ENCODE measurements at regions of chr6 and their contacts with region 1.

Region 1: DNA sequence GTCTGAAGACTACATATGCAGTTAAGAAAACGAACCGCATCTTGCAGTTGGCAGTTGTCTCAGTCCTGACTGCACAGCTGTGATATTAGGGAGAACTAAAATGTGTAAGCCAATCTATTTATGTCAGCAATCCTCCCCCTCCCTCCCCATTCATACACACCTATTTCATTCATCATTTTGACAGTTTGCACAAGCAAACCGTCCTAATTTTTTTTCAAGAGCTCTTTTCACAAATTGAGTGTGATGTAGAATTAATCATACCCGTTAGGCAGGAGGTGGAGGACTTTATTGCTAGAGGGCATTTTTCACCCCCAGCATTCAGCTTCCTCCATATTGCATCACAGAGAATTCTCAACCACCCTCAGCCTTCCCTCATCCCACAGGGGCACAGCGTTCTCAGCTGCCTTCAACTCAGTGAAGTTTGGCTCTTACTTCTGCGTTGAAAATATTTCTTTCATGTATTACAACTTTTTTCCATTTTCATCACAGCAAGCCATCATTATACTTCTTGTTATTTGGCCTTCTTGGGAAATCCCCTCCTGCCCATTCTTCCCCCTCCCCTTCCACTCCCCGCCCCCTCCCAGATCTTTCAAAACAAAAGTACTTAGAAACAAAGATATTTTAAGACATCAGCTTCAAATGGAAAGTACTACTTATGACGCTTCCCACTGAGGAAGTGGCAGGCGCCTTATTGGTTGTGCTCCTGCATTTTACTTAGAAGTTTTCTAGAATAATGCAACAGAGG is 37.5 kb downstream of the NOX3 start:
- DNase-seq: peak; percentile 49
- H3K4me3 Mint-ChIP-seq: peak overlapping the region; percentile 73
- H3K27ac Mint-ChIP-seq: peak overlapping the region; percentile 100
- H3K4me1 Mint-ChIP-seq: peaks cover 44% of the 10 kb centered on the region
- H3K27me3 Mint-ChIP-seq: no peaks in the 10 kb centered on the region

Region 2: GRCh38 chr6:154733012-154733625 is 685.1 kb before region 1 on chr6 and contains the start of gene SCAF8:
- intact Hi-C with region 1: loop called (anchors 2 kb)
- DNase-seq: peak; percentile 85
- H3K4me3 Mint-ChIP-seq: peak within 1 kb of the TSS; percentile 97
- H3K27ac Mint-ChIP-seq: peak within 1 kb of the TSS; percentile 96
- H3K4me1 Mint-ChIP-seq: peaks cover 33% of the 10 kb centered on the region
- H3K27me3 Mint-ChIP-seq: peaks cover 4% of the 10 kb centered on the region
- total RNA-seq, gene SCAF8: 37.7 and 40.9 TPM in 2 replicates

Region 3: DNA sequence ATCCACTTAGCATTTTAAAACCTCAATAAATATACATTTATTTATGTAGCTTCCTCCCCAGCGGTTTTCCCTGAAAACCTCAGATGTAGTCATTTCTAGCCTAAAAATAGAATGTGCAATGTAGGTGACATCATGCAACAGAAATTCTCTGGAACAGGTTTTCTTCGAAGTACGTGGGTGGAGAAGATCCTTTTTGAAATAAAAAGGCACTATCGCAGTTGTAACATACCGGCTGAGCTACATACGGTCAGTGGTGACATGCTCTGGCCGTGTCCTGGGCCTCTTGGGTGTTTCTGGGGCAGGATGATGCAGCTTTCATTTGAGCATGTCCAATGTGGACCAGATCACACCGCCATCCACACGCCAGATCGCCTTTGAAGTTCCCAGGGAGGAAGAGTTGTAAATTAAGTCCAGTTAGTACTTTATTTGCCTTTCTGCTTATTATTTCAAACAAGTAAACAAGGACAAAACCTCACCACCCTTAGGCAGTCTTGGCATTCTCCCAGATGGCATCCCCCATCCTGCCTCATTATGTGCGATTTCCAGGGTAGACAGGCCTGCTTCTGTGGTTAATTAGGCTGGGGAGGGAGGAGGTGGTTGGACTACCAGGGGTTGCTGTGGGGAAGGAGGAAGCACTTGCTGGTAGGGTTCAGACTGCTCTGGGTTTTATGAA is 263.9 kb before region 1 on chr6:
- intact Hi-C with region 1: loop called (anchors 1 kb)
- DNase-seq: peak; percentile 48
- H3K4me3 Mint-ChIP-seq: peak overlapping the region; percentile 78
- H3K27ac Mint-ChIP-seq: peak overlapping the region; percentile 97
- H3K4me1 Mint-ChIP-seq: peaks cover 90% of the 10 kb centered on the region
- H3K27me3 Mint-ChIP-seq: peaks cover 2% of the 10 kb centered on the region

Region 4: GRCh38 chr6:155223646-155224451 is 194.3 kb before region 1 on chr6:
- intact Hi-C with region 1: loop called (anchors 1 kb)
- DNase-seq: peak; percentile 65
- H3K4me3 Mint-ChIP-seq: peak overlapping the region; percentile 70
- H3K27ac Mint-ChIP-seq: peak overlapping the region; percentile 91
- H3K4me1 Mint-ChIP-seq: peaks cover 34% of the 10 kb centered on the region
- H3K27me3 Mint-ChIP-seq: peaks cover 2% of the 10 kb centered on the region

Region 5: GRCh38 chr6:155351273-155352129 is 66.7 kb before region 1 on chr6:
- intact Hi-C with region 1: no loop called
- DNase-seq: no peak
- H3K4me3 Mint-ChIP-seq: no peak overlapping the region
- H3K27ac Mint-ChIP-seq: no peak overlapping the region
- H3K4me1 Mint-ChIP-seq: peaks cover 8% of the 10 kb centered on the region
- H3K27me3 Mint-ChIP-seq: peaks cover 2% of the 10 kb centered on the region

Region 6: DNA sequence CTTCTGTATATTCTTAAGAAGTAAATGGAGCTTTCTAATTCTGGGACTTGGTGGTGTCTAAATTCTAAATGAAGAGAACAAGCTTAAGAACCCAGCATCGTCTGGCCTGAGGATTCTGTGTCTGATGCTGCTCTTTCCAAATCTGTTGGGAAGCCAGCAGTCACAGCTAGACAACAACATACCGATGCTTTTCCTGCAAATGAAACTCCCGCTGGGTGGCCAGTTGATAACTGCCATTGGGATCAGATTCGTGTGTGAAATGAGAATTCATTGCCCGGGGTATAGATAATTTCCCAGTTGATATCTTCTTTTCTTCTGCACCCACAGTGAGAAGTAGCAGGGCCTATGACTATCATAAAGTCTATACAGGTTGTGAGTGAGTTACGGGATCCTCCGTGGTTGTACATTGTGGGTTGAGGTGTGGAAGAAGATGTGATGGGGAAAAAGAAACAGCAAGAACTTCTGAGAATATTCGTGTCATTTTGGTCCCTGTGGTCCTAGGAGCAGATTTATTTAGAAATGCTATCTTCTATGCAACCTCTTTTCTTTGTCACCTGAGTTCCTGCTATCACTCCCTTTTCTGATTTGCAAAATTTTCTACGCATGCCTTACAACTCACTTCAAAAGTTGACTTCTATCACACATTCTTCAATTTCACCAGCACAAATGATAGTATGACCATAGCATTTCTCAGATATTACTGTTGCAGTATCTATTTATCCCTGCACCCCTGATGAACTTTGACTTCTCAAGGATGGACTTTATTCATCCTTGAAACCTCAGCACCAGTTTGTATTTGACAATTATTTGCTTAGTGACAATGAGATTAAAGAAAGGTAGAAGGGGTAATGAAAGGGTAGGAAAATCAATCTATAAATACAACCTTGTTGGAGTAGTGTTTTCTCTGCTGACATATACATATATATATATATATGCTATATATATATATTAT is 27.0 kb after region 1 on chr6:
- intact Hi-C with region 1: loop called (anchors 1 kb)
- DNase-seq: peak; percentile 11
- H3K4me3 Mint-ChIP-seq: no peak overlapping the region
- H3K27ac Mint-ChIP-seq: no peak overlapping the region
- H3K4me1 Mint-ChIP-seq: peaks cover 18% of the 10 kb centered on the region
- H3K27me3 Mint-ChIP-seq: peaks cover 5% of the 10 kb centered on the region

Region 7: DNA sequence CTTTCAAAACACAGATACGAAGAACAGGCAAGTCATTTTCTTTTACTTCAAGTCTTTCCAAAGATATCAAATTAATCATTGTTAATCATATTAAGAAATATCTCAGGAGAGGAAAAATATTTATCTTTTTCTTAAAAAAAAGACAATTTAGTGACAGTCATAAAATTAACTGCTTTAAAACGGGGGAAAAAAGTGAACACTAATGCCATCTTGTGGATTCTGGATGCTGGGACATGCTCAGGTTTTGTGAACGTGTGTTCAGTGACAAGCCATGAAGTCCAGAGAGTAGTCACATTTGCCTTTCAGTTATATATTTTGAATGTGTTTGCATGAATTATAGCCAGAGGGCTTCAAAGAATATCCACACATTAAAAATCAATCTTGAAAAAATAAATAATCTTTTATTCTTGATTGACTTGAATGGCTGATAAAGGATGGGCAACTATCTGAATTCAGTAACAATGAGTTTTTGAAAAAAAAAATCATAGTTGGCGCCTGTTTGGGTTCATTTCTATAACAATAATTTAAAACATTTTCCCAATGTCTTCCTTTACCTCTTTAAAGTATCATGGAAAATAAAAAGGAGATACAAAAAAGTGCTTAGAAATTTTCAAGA is 112.1 kb after region 1 on chr6:
- intact Hi-C with region 1: loop called (anchors 1 kb)
- DNase-seq: no peak
- H3K4me3 Mint-ChIP-seq: no peak overlapping the region
- H3K27ac Mint-ChIP-seq: no peak overlapping the region
- H3K4me1 Mint-ChIP-seq: peaks cover 10% of the 10 kb centered on the region
- H3K27me3 Mint-ChIP-seq: peaks cover 4% of the 10 kb centered on the region

Region 8: GRCh38 chr6:155599561-155599960 is 181.4 kb after region 1 on chr6:
- intact Hi-C with region 1: no loop called
- DNase-seq: no peak
- H3K4me3 Mint-ChIP-seq: no peak overlapping the region
- H3K27ac Mint-ChIP-seq: no peak overlapping the region
- H3K4me1 Mint-ChIP-seq: no peaks in the 10 kb centered on the region
- H3K27me3 Mint-ChIP-seq: peaks cover 7% of the 10 kb centered on the region

Region 9: DNA sequence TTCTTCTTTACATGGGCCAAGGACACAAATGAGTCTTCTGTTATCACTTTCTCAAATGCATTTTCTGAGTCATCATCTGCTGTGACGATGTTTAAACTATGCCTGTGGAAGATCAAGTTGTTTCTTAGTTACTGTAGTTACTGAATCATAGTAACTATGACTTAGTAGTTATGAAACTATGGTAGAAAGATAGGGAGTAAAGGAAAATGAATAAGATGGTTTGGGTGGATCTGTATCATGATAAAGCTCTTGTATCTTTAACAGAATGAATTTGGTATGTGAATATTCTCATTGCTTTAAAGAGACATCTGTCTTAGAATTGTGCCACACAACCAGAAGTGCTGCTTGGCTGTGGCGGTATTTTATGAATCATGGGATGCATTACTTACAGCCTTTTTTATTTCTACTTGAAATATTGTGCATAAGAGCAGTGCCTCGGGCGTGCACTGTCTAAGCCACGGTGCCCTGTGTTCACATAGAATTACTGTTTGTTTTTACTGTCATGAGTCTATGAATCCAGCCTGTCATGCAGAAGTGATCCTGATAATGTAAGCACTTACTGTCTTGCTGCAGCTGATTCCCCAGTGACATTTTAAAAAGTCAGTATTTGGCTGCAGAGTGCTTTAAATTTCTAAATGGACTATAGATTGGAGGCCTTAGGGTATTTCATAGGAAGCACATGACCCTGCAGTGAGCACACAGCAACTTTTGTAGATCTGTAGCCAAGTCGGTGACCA is 1689.9 kb after region 1 on chr6:
- intact Hi-C with region 1: loop called (anchors 10 kb)
- DNase-seq: no peak
- H3K4me3 Mint-ChIP-seq: no peak overlapping the region
- H3K27ac Mint-ChIP-seq: peak overlapping the region; percentile 73
- H3K4me1 Mint-ChIP-seq: peaks cover 55% of the 10 kb centered on the region
- H3K27me3 Mint-ChIP-seq: no peaks in the 10 kb centered on the region

Measured in activated T-helper 1 cell treated with anti-CD3 and anti-CD28 coated beads, Interleukin-12 subunit alpha, Interleukin-12 subunit beta, Interleukin-2, Interleukin-4 antibody, amounts not matched to agents 30 ng/mL and 10 ng/mL and 1 ng/mL, durations not matched to agents 14 hours and 24 hours and 36 hours (primary cell).